ENCODE measurements at regions of chr15 and their contacts with region 1.

Region 1: DNA sequence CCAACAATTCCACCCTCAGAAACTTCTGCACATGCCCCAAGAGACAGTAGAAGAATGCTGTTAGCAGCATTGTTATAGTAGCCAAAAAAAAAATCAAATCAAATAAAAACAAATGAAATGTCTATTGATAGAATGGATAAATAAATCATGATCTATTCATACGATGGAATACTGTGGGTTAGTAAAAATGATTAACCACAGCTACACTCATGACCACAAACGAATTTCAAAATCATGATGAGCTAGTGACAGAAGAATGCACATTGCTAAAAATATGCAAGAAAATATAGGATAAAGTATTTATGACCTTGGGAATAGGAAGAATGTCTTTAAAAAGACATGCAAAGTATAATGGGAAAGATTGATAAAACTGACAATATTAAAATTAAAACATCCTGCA is 57.5 kb upstream of the ACAN start:
- DNase-seq: no peak
- ATAC-seq: no peak
- H3K4me3 ChIP-seq: no peak overlapping the region
- H3K27ac ChIP-seq: no peak overlapping the region
- H3K4me1 ChIP-seq: peaks cover 3 to 6% of the 10 kb centered on the region in 2 donors
- H3K27me3 ChIP-seq: no peaks in the 10 kb centered on the region

Region 2: GRCh38 chr15:88657326-88658069 is 88.2 kb before region 1 on chr15:
- intact Hi-C with region 1: loop called (anchors 5 kb)
- DNase-seq: peak; percentile 65 to 88
- ATAC-seq: peak; percentile 69
- H3K4me3 ChIP-seq: no peak overlapping the region
- H3K27ac ChIP-seq: no peak overlapping the region
- H3K4me1 ChIP-seq: peaks cover 0 to 13% of the 10 kb centered on the region in 2 donors
- H3K27me3 ChIP-seq: no peaks in the 10 kb centered on the region

Region 3: GRCh38 chr15:88704791-88705768 is 40.6 kb before region 1 on chr15:
- intact Hi-C with region 1: loop called in 1 of 2 experiments (anchors 2 kb)
- DNase-seq: peak; percentile 89 to 95
- ATAC-seq: peak; percentile 79
- H3K4me3 ChIP-seq: peak overlapping the region; percentile 0 to 63
- H3K27ac ChIP-seq: peak overlapping the region in 1 of 2 donors; percentile 91
- H3K4me1 ChIP-seq: no peaks in the 10 kb centered on the region
- H3K27me3 ChIP-seq: no peaks in the 10 kb centered on the region

Region 4: DNA sequence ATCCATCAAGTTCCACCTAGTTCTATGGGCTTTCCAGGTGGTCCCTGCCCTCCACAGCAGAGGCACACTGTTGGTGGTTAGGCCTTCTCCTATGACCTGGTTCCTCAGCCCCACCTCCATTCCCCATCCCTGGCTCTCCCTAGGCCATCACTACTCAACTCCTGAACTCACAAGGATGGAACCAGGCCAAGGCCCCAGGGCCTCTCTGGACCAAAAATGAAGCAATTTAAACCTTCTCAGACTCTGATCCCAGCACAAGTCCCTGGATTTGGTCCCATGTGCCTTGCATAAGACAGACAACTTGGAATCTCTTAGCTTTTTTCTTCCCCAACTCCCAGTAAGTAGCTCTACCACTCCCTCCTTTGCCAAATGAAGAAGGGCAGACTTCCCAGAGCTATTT is 43.1 kb after region 1 on chr15:
- intact Hi-C with region 1: no loop called
- DNase-seq: no peak
- ATAC-seq: no peak
- H3K4me3 ChIP-seq: no peak overlapping the region
- H3K27ac ChIP-seq: no peak overlapping the region
- H3K4me1 ChIP-seq: peaks cover 0 to 1% of the 10 kb centered on the region in 2 donors
- H3K27me3 ChIP-seq: no peaks in the 10 kb centered on the region

Region 5: DNA sequence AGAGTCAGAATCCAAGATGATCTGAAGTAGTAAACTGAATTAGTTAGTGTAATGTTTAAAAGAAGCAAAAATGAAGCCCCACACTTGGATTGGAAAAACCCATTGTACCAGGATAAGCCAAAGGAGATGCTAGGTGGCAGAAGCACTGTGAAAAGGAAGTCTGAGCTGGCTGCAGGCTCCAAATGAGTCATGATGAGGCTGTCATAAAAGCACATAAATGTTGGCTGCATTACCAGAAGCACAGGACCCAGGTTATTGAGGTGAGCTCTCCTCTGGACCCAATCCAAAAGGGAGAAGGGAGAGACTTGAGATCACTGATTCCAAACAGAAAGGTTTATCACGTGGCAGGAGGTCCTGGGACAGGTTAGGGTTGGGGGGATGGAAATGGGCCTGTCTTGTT is 54.3 kb after region 1 on chr15:
- intact Hi-C with region 1: loop called (anchors 5 kb)
- DNase-seq: no peak
- ATAC-seq: no peak
- H3K4me3 ChIP-seq: no peak overlapping the region
- H3K27ac ChIP-seq: no peak overlapping the region
- H3K4me1 ChIP-seq: no peaks in the 10 kb centered on the region
- H3K27me3 ChIP-seq: no peaks in the 10 kb centered on the region

Measured in aorta (tissue), 5 donors.